ENCODE measurements at regions of chr15 and their contacts with region 1.

Region 1: DNA sequence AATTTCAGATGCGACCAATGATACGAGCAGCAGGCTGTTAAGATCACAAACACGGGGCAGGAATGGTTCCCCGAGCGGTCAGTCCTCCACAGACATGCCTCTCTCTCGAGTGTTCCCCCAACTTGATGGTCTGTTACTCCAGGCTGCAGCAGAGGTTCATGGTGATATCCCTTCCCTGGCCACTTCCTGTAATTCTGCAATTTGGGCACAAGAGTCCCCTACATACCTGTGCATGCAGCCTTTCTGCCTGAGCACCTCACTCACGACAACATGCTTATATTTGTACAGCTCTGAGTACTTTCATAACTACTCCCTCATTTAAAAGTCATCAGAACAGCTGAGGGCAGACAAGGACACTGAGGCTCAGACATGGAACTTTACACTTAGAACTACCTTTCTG is 408.1 kb upstream of the NR2F2 start:
- DNase-seq: peak; percentile 34
- H3K4me3 Mint-ChIP-seq: no peak overlapping the region
- H3K27ac Mint-ChIP-seq: no peak overlapping the region
- H3K4me1 Mint-ChIP-seq: no peaks in the 10 kb centered on the region
- H3K27me3 Mint-ChIP-seq: no peaks in the 10 kb centered on the region
- CTCF ChIP-seq: peak; percentile 25

Region 2: GRCh38 chr15:95826412-95827195 is 95.8 kb before region 1 on chr15:
- CTCF ChIA-PET with region 1: no interaction called
- intact Hi-C with region 1: no loop called
- DNase-seq: peak; percentile 14
- H3K4me3 Mint-ChIP-seq: no peak overlapping the region
- H3K27ac Mint-ChIP-seq: no peak overlapping the region
- H3K4me1 Mint-ChIP-seq: no peaks in the 10 kb centered on the region
- H3K27me3 Mint-ChIP-seq: no peaks in the 10 kb centered on the region
- CTCF ChIP-seq: no peak

Region 3: GRCh38 chr15:95912066-95912625 is 10.3 kb before region 1 on chr15:
- CTCF ChIA-PET with region 1: no interaction called
- intact Hi-C with region 1: no loop called
- DNase-seq: no peak
- H3K4me3 Mint-ChIP-seq: no peak overlapping the region
- H3K27ac Mint-ChIP-seq: no peak overlapping the region
- H3K4me1 Mint-ChIP-seq: no peaks in the 10 kb centered on the region
- H3K27me3 Mint-ChIP-seq: no peaks in the 10 kb centered on the region
- CTCF ChIP-seq: no peak

Region 4: DNA sequence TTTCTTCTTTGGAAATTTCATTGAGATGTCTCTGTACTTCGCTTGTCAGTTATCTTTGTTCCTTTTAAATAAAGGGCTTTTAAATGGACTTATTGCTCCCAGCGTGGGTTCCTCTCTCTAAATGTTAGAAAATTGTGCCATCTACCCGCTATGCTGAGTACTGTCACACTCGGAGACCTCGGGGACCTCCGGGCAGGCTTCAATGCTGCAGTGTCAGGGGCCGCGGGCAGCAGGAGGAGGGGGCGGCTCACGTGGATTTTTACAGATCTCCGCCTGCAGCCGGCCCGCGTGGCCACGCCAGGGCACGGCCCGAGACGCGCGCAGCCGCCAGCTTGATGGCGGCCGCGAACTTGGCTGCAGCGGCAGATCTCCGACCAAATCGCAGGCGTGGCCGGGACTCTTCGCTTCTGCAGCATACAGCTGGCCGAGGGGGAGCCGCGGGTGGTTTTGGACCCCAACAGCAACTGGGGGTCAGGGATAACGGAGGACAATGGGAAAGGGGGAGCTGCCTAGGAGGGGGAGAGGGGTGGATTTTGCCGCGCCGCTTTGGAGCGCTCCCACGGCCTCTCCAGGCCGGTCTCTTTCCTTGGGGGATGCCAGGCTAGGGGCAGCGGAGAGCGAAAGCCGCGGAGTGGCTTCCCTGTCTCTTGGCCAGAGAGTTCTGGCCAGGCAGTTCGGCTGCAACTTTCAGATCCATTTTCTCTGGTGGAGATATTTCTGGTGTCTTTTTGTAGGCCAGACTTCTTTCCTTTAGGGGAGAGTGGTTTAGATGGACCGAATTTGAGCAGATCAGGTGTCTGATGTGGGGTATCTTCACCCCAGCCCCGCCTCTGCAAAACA is 423.3 kb after region 1 on chr15:
- CTCF ChIA-PET with region 1: no interaction called
- intact Hi-C with region 1: loop called (anchors 5 kb)
- DNase-seq: peak; percentile 80
- H3K4me3 Mint-ChIP-seq: no peak overlapping the region
- H3K27ac Mint-ChIP-seq: no peak overlapping the region
- H3K4me1 Mint-ChIP-seq: peaks cover 70% of the 10 kb centered on the region
- H3K27me3 Mint-ChIP-seq: no peaks in the 10 kb centered on the region
- CTCF ChIP-seq: peak; percentile 66